ENCODE measurements at regions of chr5 and their contacts with region 1.

Region 1: GRCh38 chr5:38265546-38266179 is 7.3 kb downstream of the EGFLAM start:
- DNase-seq: peak in 1 of 2 experiments; percentile 91
- H3K4me3 ChIP-seq: 0 out of 8 replicates have a peak overlapping the region, but pooled peaks of 1 of the 4 experiments have one; percentile 27
- H3K27ac ChIP-seq: no peak overlapping the region
- H3K4me1 ChIP-seq: peaks cover 0 to 4% (median 0%) of the 10 kb centered on the region in 4 experiments; a peak in 1 of 7 replicates
- H3K27me3 ChIP-seq: peaks cover 0 to 20% (median 7%) of the 10 kb centered on the region in 4 experiments; a peak in 6 of 7 replicates
- CTCF ChIP-seq: peak; percentile 52 to 72 (median 69)
- EP300 ChIP-seq: no peak
- POLR2A ChIP-seq: no peak
- RAD21 ChIP-seq: peak; percentile 58 to 66

Region 2: GRCh38 chr5:38208782-38209378 is 56.8 kb before region 1 on chr5:
- CTCF ChIA-PET with region 1: interaction called, 14 read pairs
- POLR2A ChIA-PET with region 1: no interaction called
- DNase-seq: no peak
- H3K4me3 ChIP-seq: no peak overlapping the region
- H3K27ac ChIP-seq: no peak overlapping the region
- H3K4me1 ChIP-seq: no peaks in the 10 kb centered on the region; a peak in 1 of 7 replicates
- H3K27me3 ChIP-seq: no peaks in the 10 kb centered on the region
- CTCF ChIP-seq: peak; percentile 14 to 76 (median 63)
- EP300 ChIP-seq: no peak
- POLR2A ChIP-seq: no peak
- RAD21 ChIP-seq: peak; percentile 90 to 94

Region 3: DNA sequence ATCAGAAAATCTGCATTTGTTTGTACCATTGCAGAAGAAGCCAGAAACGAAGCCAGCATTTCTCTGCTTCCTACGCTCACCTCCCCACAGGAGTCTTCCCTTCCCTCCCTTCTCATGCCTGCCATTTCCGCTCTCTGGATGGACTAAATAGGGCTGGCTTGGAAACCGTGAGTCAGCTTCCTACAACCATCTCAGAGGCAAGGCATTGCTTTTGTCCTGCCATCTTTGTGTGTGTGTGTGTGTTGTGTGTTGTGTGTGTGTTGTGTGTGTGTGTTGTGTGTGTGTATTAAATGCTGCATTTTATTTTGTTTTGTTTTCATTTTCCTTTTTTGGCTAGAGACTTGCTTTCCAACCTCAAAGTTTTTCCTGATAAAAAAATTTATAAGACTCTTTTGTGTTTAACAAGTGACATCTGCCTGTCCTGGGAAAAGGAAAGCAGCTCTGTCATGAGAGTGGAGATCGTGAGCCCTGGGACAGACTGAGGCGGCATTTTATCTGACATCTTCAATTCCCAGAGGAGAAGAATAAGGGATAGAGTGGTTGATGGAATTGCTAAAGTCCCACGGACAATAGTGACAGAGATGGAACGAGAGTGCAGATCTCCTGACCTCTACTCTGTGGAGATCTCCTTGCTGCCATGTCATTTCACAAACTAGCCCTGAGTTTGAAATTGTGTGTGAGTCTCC is 14.8 kb before region 1 on chr5:
- CTCF ChIA-PET with region 1: interaction called, 26 read pairs
- POLR2A ChIA-PET with region 1: no interaction called
- DNase-seq: no peak
- H3K4me3 ChIP-seq: no peak overlapping the region
- H3K27ac ChIP-seq: no peak overlapping the region
- H3K4me1 ChIP-seq: no peaks in the 10 kb centered on the region
- H3K27me3 ChIP-seq: peaks cover 3 to 8% (median 6%) of the 10 kb centered on the region in 4 experiments
- CTCF ChIP-seq: no peak
- EP300 ChIP-seq: no peak
- POLR2A ChIP-seq: no peak
- RAD21 ChIP-seq: no peak

Region 4: DNA sequence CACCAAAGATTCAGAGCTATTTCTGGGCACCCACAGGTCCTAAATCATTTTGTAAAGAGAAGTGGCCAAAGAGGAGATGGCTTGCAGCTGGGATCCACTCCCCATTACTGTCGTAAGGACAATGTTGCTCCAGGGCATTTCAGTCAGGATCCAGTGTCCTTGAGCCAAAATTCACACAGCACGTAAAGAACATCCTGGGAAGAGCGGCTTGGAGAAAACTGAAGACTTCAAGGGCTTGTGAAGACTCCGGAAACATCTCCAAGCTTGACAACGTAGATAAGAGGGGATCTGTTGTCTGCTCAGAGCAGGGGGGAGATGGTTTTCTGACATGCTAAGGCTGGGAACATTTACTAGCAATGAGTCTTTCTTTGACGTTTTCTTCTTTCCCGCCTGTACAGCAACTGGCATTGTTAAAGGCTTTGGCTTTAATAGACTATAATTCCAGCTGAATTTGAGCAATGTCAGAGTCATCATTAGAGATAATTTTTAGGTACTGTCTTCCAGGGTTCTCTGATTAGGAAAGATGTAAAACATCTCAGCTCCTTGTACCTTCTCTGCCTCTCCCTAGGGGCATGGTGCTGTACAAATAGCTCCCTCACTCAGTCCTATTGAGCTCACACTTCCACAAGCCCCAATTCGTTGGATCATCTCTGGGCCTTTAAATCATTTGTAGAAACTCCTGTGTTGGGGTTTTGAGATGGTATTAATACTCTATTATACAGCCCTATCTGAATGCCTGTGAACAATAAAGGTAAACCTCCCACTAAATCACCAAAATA is 32.4 kb after region 1 on chr5:
- CTCF ChIA-PET with region 1: interaction called, 19 read pairs
- POLR2A ChIA-PET with region 1: no interaction called
- DNase-seq: no peak
- H3K4me3 ChIP-seq: no peak overlapping the region
- H3K27ac ChIP-seq: no peak overlapping the region
- H3K4me1 ChIP-seq: no peaks in the 10 kb centered on the region
- H3K27me3 ChIP-seq: no peaks in the 10 kb centered on the region
- CTCF ChIP-seq: no peak
- EP300 ChIP-seq: no peak
- POLR2A ChIP-seq: no peak
- RAD21 ChIP-seq: no peak

Region 5: DNA sequence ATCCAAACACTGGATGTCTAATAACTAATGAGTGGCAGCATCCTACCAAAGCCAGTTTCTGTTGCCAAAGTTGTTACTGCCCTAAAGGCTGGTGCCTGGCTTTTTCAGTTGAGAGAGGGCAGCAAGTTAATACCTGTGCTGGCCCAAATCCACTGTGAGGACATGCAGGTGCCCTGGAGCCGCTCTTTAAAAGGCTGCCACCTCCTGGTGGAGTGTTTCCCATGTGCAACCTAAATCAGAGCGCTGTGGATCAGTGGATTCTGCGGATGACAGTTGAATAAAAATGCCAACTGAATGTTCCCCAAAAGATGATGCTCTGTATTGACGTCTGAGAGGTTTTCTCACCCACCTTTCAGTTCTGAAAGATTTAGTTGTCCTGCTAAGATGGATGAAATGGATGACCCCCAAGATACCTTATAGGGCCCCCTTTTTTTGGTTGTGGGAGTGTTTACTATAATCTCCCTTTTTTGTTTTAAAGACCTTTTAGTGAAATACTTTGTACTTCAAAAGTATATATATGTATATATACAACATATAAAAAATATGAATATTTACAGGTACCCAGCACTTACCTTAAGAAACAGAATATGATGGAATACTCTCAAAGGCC is 139.1 kb after region 1 on chr5:
- CTCF ChIA-PET with region 1: interaction called, 13 read pairs
- POLR2A ChIA-PET with region 1: no interaction called
- DNase-seq: peak in 1 of 2 experiments; percentile 61
- H3K4me3 ChIP-seq: no peak overlapping the region
- H3K27ac ChIP-seq: no peak overlapping the region
- H3K4me1 ChIP-seq: no peaks in the 10 kb centered on the region
- H3K27me3 ChIP-seq: no peaks in the 10 kb centered on the region
- CTCF ChIP-seq: peak; percentile 67 to 80 (median 80)
- EP300 ChIP-seq: no peak
- POLR2A ChIP-seq: no peak
- RAD21 ChIP-seq: peak; percentile 78 to 80

Measured in H1 (cell line).